ENCODE measurements at regions of chr7 and their contacts with region 1.

Region 1: GRCh38 chr7:128381161-128381821 is 19.8 kb upstream of the PRRT4 start:
- H3K4me3 ChIP-seq: no peak overlapping the region
- H3K27ac ChIP-seq: no peak overlapping the region
- H3K4me1 ChIP-seq: no peaks in the 10 kb centered on the region
- CTCF ChIP-seq: peak; percentile 59

Region 2: DNA sequence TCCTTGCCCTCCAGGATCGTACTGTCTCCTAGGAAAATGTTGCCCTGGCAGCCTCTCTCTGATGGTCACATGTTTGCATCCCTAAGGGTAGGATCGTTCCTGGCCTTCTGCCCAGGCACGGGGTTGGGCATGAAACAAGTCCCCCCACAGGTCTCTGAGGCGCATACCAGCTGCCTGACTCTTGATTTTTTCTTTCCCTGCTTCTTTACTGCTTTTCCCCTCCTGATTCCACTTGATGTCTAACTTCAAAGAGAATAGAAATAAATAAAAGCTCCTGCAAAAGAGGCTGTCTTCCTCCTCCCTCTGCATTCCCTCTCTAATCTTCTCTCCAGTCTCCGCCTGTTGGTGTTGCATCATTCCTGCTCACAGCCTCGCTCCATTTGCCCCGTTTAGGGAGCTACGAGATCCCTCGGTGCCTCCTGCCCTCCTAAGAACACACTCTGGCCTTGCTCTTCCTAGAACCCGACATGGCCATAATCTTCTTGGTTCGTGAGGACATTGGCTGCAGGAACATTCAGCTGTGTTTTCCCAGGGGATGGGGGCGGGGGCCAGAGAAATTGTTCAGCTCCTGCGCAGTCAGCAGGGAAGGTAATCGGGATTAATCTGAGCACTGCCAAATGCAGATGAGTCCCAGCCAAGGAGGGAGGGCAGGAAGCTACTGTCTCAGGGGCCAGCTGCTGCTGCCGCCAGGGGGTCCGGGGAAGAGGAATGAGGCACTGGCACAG is 114.2 kb before region 1 on chr7:
- CTCF ChIA-PET with region 1: no interaction called
- POLR2A ChIA-PET with region 1: no interaction called
- H3K4me3 ChIP-seq: no peak overlapping the region
- H3K27ac ChIP-seq: no peak overlapping the region
- H3K4me1 ChIP-seq: no peaks in the 10 kb centered on the region
- CTCF ChIP-seq: peak; percentile 17; the same call in 1 of the 2 replicates

Region 3: GRCh38 chr7:128356546-128357216 is 24.6 kb before region 1 on chr7:
- CTCF ChIA-PET with region 1: interaction called, 378 read pairs
- POLR2A ChIA-PET with region 1: no interaction called
- H3K4me3 ChIP-seq: no peak overlapping the region
- H3K27ac ChIP-seq: no peak overlapping the region
- H3K4me1 ChIP-seq: no peaks in the 10 kb centered on the region; the same call in 1 of the 2 replicates
- CTCF ChIP-seq: no peak

Region 4: GRCh38 chr7:128961027-128961659 is 579.9 kb after region 1 on chr7:
- CTCF ChIA-PET with region 1: interaction called, 14 read pairs
- POLR2A ChIA-PET with region 1: no interaction called
- H3K4me3 ChIP-seq: no peak overlapping the region
- H3K27ac ChIP-seq: no peak overlapping the region
- H3K4me1 ChIP-seq: no peaks in the 10 kb centered on the region
- CTCF ChIP-seq: no peak

Measured in HEK293 (cell line).